Activated CD4-positive, alpha-beta T cell treated with anti-CD3 and anti-CD28 coated beads, Interleukin-2, amount 10 ng/mL, durations not matched to agents 24 days and 14 days (primary cell): ENCODE measurements at regions of chr1 and their contacts with region 1.

Region 1: GRCh38 chr1:230104395-230105244 is 37.6 kb downstream of the GALNT2 start:
- DNase-seq: peak; percentile 84
- H3K4me3 Mint-ChIP-seq: peak overlapping the region; percentile 77
- H3K27ac Mint-ChIP-seq: peak overlapping the region; percentile 88
- H3K4me1 Mint-ChIP-seq: peaks cover 81% of the 10 kb centered on the region
- H3K27me3 Mint-ChIP-seq: no peaks in the 10 kb centered on the region

Region 2: DNA sequence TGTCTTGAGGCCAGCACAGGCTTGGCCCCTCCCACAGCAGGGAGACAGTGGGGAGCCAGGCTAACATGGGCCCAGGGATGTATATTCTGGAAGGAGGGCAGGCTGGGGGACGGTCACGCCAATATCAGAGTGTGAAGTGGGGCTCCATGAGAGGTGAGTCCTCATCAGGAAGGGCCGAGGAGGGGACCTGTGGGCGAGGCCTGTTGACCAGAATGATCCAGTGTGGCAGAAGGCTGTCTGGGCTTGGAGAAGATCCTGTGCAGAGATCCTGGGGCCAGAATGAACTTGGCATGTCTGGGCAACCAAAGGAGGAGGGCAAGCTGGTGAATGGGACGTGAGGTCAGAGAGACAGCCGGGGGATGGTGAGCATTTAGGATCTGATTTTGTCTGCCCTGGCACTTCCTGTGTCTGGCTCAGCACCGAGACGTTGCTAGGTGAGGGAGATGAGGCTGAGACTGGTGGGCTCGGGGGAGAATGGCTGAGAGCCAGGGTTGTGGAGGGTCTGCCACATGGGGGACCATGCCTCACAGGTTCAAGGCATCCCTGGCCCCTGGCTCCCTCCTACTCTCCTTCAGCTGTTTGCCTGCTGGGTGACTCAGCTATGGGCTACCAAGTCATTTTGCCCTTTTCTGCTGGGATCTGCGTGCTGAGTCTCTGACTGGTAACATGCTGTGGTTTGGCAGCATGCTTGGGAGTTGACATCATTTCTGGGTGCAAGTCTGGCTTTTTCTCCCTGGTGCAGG is 20.3 kb before region 1 on chr1:
- intact Hi-C with region 1: loop called (anchors 1 kb)
- DNase-seq: peak; percentile 76
- H3K4me3 Mint-ChIP-seq: peak overlapping the region; percentile 36
- H3K27ac Mint-ChIP-seq: peak overlapping the region; percentile 76
- H3K4me1 Mint-ChIP-seq: peaks cover 63% of the 10 kb centered on the region
- H3K27me3 Mint-ChIP-seq: no peaks in the 10 kb centered on the region

Region 3: GRCh38 chr1:230120926-230121381 is 16.3 kb after region 1 on chr1:
- intact Hi-C with region 1: loop called (anchors 1 kb)
- DNase-seq: no peak
- H3K4me3 Mint-ChIP-seq: no peak overlapping the region
- H3K27ac Mint-ChIP-seq: no peak overlapping the region
- H3K4me1 Mint-ChIP-seq: peaks cover 64% of the 10 kb centered on the region
- H3K27me3 Mint-ChIP-seq: no peaks in the 10 kb centered on the region

Region 4: GRCh38 chr1:230303822-230304221 is 199.2 kb after region 1 on chr1:
- intact Hi-C with region 1: loop called (anchors 2 kb)
- DNase-seq: no peak
- H3K4me3 Mint-ChIP-seq: no peak overlapping the region
- H3K27ac Mint-ChIP-seq: peak overlapping the region; percentile 2
- H3K4me1 Mint-ChIP-seq: peaks cover 19% of the 10 kb centered on the region
- H3K27me3 Mint-ChIP-seq: no peaks in the 10 kb centered on the region